ENCODE measurements at regions of chr7 and their contacts with region 1.

Region 1: GRCh38 chr7:11847336-11847735 is 15.3 kb upstream of the THSD7A start:
- DNase-seq: no peak
- ATAC-seq: no peak
- H3K4me3 ChIP-seq: peak overlapping the region in 2 of 10 donors; percentile 2 to 4
- H3K27ac ChIP-seq: no peak overlapping the region
- H3K4me1 ChIP-seq: no peaks in the 10 kb centered on the region
- H3K27me3 ChIP-seq: no peaks in the 10 kb centered on the region
- CTCF ChIP-seq: no peak

Region 2: DNA sequence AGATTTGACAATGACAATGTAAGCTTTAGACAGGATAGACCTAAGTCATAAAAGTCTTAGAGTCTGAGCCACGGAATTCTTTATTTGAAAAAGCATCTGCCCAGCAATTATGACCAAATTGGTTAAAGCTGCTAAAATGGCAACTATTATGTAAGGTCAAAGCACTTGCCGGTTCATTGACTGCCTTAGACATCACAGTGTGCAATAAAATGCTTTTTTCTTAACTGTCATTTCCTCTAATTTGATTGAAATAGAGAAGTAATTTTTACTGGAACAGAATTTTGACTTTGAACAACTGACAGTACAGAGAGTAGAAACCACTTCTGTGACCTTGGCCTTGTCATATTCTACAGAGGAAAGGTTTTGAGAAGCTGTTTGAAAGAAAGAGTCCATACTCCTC is 158.2 kb before region 1 on chr7:
- intact Hi-C with region 1: no loop called
- DNase-seq: no peak
- ATAC-seq: no peak
- H3K4me3 ChIP-seq: no peak overlapping the region
- H3K27ac ChIP-seq: no peak overlapping the region
- H3K4me1 ChIP-seq: no peaks in the 10 kb centered on the region
- H3K27me3 ChIP-seq: no peaks in the 10 kb centered on the region
- CTCF ChIP-seq: no peak

Region 3: DNA sequence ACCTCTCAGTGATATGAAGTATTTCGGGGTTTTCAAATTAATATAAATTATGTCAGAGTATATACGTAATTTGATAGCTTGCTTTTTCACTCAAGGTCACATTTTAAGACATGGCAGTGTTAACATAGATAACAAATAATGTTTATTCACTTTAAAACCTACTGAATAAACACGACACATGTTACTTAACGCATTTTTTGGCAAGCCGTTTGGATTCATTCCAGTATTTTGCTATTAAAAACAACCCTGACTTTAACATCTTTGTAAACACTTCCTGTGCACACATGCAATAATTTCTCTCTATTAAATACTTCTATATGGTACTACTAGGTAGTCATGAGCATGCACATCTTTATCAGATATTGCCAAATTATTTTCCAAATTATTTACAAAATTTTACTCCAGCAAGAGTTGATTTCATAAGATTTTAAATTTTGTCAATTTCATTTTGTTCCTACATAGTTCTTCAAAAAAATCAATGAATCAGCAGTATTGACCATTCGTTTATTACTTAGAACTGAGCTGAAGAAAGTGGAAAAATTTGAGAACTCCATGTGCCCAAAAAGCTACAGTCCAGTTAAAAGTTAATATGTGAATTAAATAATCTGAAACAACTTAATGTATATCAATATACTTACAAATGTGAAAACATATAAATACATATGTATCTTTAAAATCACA is 11.4 kb after region 1 on chr7:
- intact Hi-C with region 1: loop called in 1 of 10 experiments (anchors 1 kb)
- DNase-seq: no peak
- ATAC-seq: no peak
- H3K4me3 ChIP-seq: no peak overlapping the region
- H3K27ac ChIP-seq: no peak overlapping the region
- H3K4me1 ChIP-seq: no peaks in the 10 kb centered on the region
- H3K27me3 ChIP-seq: no peaks in the 10 kb centered on the region
- CTCF ChIP-seq: no peak

Measured in heart right ventricle (tissue), 16 donors.